ENCODE measurements at regions of chr22 and their contacts with region 1.

Region 1: GRCh38 chr22:30089655-30089974 is 9.4 kb downstream of the HORMAD2 start:
- DNase-seq: no peak
- H3K4me3 Mint-ChIP-seq: no peak overlapping the region
- H3K27ac Mint-ChIP-seq: no peak overlapping the region
- H3K4me1 Mint-ChIP-seq: peaks cover 15% of the 10 kb centered on the region
- H3K27me3 Mint-ChIP-seq: peaks cover 5% of the 10 kb centered on the region

Region 2: GRCh38 chr22:29587938-29588699 is 501.5 kb before region 1 on chr22:
- intact Hi-C with region 1: loop called (anchors 1 kb)
- DNase-seq: no peak
- H3K4me3 Mint-ChIP-seq: no peak overlapping the region
- H3K27ac Mint-ChIP-seq: no peak overlapping the region
- H3K4me1 Mint-ChIP-seq: peaks cover 11% of the 10 kb centered on the region
- H3K27me3 Mint-ChIP-seq: no peaks in the 10 kb centered on the region

Region 3: DNA sequence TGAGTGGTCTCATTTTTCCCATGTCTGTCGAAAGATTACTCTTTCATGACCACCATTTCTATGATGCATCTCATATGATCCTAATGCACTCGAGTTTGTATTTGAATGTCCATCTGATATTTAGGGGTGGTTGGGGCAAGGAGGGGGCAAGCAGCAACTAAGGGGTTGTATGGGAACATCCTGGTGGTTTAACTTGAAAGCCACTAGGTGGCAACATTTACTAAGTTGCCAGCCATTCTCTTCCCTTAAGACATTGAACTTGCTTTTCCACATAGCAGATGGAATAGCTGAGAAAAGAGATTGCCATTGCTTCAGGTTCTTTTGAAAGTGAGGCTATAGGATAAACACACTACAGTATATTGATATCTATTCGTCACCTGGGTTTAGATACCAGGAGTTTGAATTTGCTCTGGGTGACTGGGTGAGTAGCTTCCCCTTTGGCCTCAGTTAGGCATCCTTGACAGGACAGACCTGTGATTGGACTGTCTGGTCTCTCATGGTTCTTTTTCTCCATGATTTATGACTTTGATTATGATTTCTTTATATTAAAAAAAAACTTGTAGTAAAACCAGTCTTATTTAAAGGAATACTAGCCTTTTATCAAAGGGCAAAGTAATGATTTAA is 453.8 kb before region 1 on chr22:
- intact Hi-C with region 1: loop called (anchors 1 kb)
- DNase-seq: no peak
- H3K4me3 Mint-ChIP-seq: no peak overlapping the region
- H3K27ac Mint-ChIP-seq: no peak overlapping the region
- H3K4me1 Mint-ChIP-seq: peaks cover 31% of the 10 kb centered on the region
- H3K27me3 Mint-ChIP-seq: no peaks in the 10 kb centered on the region

Region 4: DNA sequence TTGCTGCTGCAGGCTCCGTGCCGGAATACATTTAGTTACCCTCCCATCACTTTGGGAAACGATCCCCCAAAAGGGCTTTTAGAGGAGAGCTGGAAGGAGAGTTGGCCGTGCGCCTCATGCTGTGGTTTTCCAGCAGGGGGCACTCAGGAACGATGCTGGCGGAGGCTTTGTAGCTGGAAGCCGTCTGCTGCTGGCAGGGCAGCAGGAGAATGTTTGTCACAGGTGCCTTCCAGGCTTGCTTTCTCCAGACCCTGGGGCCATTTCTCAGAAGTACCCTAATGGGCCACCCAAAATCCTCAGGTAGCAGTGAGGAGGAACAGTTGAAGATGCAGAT is 399.8 kb before region 1 on chr22:
- intact Hi-C with region 1: loop called (anchors 1 kb)
- DNase-seq: no peak
- H3K4me3 Mint-ChIP-seq: no peak overlapping the region
- H3K27ac Mint-ChIP-seq: no peak overlapping the region
- H3K4me1 Mint-ChIP-seq: peaks cover 4% of the 10 kb centered on the region
- H3K27me3 Mint-ChIP-seq: no peaks in the 10 kb centered on the region

Region 5: GRCh38 chr22:29883045-29883774 is 206.4 kb before region 1 on chr22 and contains the start of gene MTMR3:
- intact Hi-C with region 1: loop called (anchors 2 kb)
- DNase-seq: peak; percentile 94
- H3K4me3 Mint-ChIP-seq: peak within 1 kb of the TSS; percentile 82
- H3K27ac Mint-ChIP-seq: peak within 1 kb of the TSS; percentile 48
- H3K4me1 Mint-ChIP-seq: peaks cover 7% of the 10 kb centered on the region
- H3K27me3 Mint-ChIP-seq: peaks cover 5% of the 10 kb centered on the region
- total RNA-seq, gene MTMR3: 20.6 and 27.8 TPM in 2 replicates

Region 6: DNA sequence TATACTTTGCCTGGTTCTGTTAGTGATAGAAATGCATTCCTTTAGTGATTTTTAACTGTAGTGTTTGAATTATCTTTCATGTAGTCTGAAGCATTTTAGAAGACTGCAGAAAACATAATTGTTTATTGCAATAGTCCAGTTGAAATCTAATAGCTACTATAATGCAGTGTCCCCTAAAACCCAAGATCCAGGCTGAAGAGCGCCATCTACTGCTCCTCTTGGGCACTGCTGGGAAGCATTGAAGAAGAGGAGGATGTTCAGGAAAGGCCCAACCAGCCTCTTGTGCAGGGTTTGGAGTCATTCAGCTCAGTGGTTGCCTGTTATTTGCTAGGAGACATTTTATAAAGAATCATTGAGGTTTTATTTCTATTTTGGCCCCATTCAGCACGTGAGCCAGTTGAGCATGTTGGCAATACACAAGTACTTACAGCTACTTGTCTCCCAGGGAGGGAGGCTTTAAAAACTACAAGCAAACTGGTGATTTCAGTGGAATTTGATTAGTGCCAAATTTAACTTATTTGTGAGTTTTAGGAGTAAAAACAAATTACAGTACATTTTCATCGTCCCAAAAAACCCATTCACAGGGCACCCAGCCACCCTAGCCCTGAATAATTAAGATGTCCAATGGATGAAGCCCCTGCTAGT is 84.3 kb before region 1 on chr22:
- intact Hi-C with region 1: loop called (anchors 1 kb)
- DNase-seq: peak; percentile 41
- H3K4me3 Mint-ChIP-seq: no peak overlapping the region
- H3K27ac Mint-ChIP-seq: no peak overlapping the region
- H3K4me1 Mint-ChIP-seq: peaks cover 17% of the 10 kb centered on the region
- H3K27me3 Mint-ChIP-seq: no peaks in the 10 kb centered on the region

Region 7: GRCh38 chr22:30044369-30044768 is 45.2 kb before region 1 on chr22:
- intact Hi-C with region 1: loop called (anchors 5 kb)
- DNase-seq: no peak
- H3K4me3 Mint-ChIP-seq: no peak overlapping the region
- H3K27ac Mint-ChIP-seq: no peak overlapping the region
- H3K4me1 Mint-ChIP-seq: peaks cover 18% of the 10 kb centered on the region
- H3K27me3 Mint-ChIP-seq: no peaks in the 10 kb centered on the region